ENCODE measurements at regions of chr11 and their contacts with region 1.

Region 1: DNA sequence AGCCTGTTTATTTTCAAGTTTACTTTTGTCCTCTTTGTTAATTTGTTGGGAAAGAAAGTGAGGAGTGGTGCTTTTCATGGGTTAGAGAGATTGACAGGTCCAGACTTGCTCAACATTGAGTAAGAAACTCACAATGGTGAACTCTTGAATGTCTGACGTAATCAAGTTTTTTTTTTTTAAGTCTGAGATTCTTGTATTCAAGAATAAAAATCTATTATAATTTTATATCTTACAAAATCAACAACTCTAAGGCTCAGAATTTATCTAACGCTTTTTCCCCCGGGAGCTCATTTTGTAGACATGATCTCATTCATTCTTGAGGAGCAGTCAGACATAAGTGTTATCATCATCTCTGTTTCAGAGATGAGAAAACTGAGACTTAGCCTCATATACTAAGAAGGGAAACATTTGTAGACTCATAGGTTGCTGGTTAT is 39.1 kb upstream of the SPTBN2 start:
- DNase-seq: no peak
- H3K4me3 ChIP-seq: no peak overlapping the region
- H3K27ac ChIP-seq: no peak overlapping the region
- H3K4me1 ChIP-seq: no peaks in the 10 kb centered on the region
- H3K27me3 ChIP-seq: no peaks in the 10 kb centered on the region
- CTCF ChIP-seq: no peak
- POLR2A ChIP-seq: no peak

Region 2: DNA sequence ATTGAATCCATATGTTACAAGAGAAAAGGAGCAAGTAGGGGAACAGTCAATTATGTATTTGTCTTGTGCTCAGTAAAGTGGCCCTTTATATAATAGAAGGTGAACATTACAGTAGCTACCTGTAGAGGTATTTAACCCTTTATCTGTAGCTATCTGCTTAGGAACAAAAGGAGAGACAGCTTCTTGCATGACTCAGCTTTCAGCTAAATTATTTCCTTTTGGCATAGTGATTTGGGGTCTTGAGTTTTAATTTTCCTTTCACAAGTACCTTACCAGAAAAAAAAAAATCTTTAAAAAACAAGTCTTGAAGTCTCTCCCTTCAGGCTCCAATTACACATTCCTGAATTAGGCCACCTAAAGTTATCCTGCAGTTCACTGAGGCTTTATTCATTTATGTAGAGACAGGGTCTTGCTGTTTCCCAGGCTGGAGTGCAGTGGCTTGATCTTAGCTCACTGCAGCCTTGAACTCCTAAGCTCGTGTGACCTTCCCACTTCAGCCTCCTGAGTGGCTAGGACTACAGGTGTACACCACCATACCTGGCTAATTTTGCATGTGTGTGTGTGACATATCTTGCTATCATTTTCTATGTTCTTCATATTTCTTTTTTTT is 42.6 kb after region 1 on chr11:
- CTCF ChIA-PET with region 1: interaction called, 4 read pairs
- POLR2A ChIA-PET with region 1: no interaction called
- dilution Hi-C with region 1: no loop called
- intact Hi-C with region 1: loop called (anchors 5 kb)
- DNase-seq: no peak
- H3K4me3 ChIP-seq: no peak overlapping the region
- H3K27ac ChIP-seq: no peak overlapping the region
- H3K4me1 ChIP-seq: peaks cover 9% of the 10 kb centered on the region
- H3K27me3 ChIP-seq: no peaks in the 10 kb centered on the region
- CTCF ChIP-seq: no peak
- POLR2A ChIP-seq: no peak